Body of pancreas (tissue), 4 donors: ENCODE measurements at regions of chr18 and their contacts with region 1.

Region 1: GRCh38 chr18:59459369-59460079 is 100.5 kb upstream of the LMAN1 start:
- DNase-seq: no peak
- ATAC-seq: peak; percentile 59
- H3K4me3 ChIP-seq: no peak overlapping the region
- H3K27ac ChIP-seq: no peak overlapping the region
- H3K4me1 ChIP-seq: peaks cover 10% of the 10 kb centered on the region
- H3K27me3 ChIP-seq: no peaks in the 10 kb centered on the region
- CTCF ChIP-seq: peak; percentile 35 to 68 (median 61)
- POLR2A ChIP-seq: no peak

Region 2: GRCh38 chr18:59823596-59824195 is 364.2 kb after region 1 on chr18:
- intact Hi-C with region 1: loop called (anchors 5 kb)
- DNase-seq: peak; percentile 62 to 78 (median 72)
- ATAC-seq: peak; percentile 67
- H3K4me3 ChIP-seq: no peak overlapping the region
- H3K27ac ChIP-seq: no peak overlapping the region
- H3K4me1 ChIP-seq: no peaks in the 10 kb centered on the region
- H3K27me3 ChIP-seq: no peaks in the 10 kb centered on the region
- CTCF ChIP-seq: peak in 6 of 7 experiments; percentile 55 to 78 (median 64)
- POLR2A ChIP-seq: no peak